Activated T-helper 2 cell treated with anti-CD3 and anti-CD28 coated beads, Interferon-gamma antibody, Interleukin-2, Interleukin-4, amounts not matched to agents 10 μg/mL and 5 μg/mL and 100 μg/mL, durations not matched to agents 14 hours and 24 hours and 36 hours (primary cell): ENCODE measurements at regions of chr7 and their contacts with region 1.

Region 1: GRCh38 chr7:92809397-92810241 is 26.8 kb downstream of the CDK6 start:
- DNase-seq: peak; percentile 71
- H3K4me3 Mint-ChIP-seq: peak overlapping the region; percentile 61
- H3K27ac Mint-ChIP-seq: peak overlapping the region; percentile 91
- H3K4me1 Mint-ChIP-seq: peaks cover 71% of the 10 kb centered on the region
- H3K27me3 Mint-ChIP-seq: no peaks in the 10 kb centered on the region

Region 2: DNA sequence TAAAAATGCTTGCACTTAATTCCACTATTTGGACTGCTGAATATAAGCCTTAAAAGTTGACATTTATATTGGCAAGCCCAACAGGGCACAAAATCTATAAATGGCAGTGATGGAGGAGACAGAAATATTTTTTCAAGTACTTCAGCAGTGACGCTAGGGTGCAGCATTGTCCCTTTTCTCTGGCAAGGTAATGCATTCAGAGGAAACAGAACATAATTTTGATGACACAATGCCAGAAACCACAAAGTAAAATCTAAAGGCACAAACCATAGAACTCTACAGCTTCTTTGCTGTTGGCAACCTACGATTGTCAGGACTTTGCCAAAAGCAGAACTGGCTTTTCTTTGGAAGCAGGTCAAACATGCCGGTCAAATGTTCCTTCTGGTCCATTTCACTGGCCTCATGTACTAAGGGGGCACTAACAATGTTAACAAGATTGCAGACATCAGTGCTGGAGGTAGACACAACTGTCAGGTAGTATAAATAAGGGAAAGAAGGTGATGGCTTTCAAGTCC is 188.5 kb before region 1 on chr7:
- intact Hi-C with region 1: loop called (anchors 1 kb)
- DNase-seq: peak; percentile 73
- H3K4me3 Mint-ChIP-seq: peak overlapping the region; percentile 37
- H3K27ac Mint-ChIP-seq: peak overlapping the region; percentile 87
- H3K4me1 Mint-ChIP-seq: peaks cover 57% of the 10 kb centered on the region
- H3K27me3 Mint-ChIP-seq: no peaks in the 10 kb centered on the region

Region 3: DNA sequence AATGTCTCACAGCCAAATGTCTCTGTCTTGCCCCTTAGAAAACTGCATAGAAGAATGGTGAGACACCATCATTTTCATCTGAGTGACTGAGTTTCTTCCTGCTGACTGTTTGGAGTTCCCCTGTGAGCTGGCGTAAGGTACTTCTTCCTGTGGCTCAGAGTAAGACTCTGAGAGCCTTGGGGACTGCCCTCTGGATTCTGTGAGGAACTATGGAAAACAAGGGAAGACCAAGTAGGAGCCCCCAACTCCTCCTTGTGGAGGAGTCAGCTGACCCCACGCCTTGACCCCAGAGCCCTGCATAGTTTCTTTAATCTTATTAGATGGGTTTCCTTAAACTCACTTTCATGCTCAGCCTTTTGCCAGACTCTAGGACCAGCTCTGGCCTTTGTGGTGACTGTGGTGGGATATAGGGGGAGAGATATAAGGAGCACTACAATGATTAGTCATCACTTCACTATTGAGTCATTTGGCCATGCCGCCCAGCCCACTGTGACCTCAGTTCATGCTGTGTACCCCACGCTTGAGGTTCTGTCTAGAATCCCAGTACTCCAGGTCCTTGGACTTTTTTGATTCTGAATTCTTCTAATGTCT is 167.6 kb before region 1 on chr7:
- intact Hi-C with region 1: loop called (anchors 5 kb)
- DNase-seq: peak; percentile 54
- H3K4me3 Mint-ChIP-seq: peak overlapping the region; percentile 47
- H3K27ac Mint-ChIP-seq: peak overlapping the region; percentile 97
- H3K4me1 Mint-ChIP-seq: peaks cover 88% of the 10 kb centered on the region
- H3K27me3 Mint-ChIP-seq: no peaks in the 10 kb centered on the region

Region 4: DNA sequence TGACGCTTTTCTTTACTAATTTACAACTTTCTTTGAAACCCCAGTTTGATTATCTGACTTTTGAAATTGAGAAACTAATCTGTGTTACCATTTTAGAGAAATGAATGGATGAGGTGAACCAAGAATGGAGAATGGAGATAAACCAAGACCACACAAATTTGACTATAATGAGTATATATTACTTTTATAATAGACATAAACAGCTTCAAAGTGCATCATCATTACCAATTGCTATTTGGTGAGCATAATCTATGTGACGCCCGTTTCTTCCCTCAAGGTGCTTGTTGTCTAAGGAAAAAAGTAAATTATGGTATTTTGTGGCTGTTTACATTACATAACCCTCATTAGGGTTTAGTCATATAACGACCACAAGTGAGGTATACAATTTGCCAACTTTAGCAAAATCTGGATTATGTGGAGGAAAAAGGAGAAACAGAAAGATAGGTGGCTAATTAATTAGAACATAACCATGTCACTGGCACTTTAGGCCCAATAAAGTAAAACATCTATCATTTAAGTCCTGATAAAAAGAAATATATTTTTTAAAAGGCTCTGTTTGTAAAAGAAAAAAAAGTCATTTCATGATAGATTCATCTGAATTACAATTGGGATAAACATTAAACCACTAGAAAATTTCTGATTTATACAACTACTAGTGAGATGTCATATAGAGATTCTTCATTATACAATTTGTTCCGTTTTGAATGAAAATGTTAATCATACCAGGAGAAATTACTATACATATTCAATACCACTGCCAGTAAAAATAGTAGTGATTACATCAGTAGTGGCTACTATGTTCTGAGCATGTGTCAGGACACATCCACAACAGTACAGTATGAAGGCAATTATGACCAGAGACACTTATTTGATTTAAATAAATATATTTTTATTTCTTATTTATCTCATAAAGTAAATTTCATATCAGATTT is 101.2 kb before region 1 on chr7:
- intact Hi-C with region 1: loop called (anchors 1 kb)
- DNase-seq: no peak
- H3K4me3 Mint-ChIP-seq: no peak overlapping the region
- H3K27ac Mint-ChIP-seq: peak overlapping the region; percentile 64
- H3K4me1 Mint-ChIP-seq: peaks cover 43% of the 10 kb centered on the region
- H3K27me3 Mint-ChIP-seq: no peaks in the 10 kb centered on the region

Region 5: DNA sequence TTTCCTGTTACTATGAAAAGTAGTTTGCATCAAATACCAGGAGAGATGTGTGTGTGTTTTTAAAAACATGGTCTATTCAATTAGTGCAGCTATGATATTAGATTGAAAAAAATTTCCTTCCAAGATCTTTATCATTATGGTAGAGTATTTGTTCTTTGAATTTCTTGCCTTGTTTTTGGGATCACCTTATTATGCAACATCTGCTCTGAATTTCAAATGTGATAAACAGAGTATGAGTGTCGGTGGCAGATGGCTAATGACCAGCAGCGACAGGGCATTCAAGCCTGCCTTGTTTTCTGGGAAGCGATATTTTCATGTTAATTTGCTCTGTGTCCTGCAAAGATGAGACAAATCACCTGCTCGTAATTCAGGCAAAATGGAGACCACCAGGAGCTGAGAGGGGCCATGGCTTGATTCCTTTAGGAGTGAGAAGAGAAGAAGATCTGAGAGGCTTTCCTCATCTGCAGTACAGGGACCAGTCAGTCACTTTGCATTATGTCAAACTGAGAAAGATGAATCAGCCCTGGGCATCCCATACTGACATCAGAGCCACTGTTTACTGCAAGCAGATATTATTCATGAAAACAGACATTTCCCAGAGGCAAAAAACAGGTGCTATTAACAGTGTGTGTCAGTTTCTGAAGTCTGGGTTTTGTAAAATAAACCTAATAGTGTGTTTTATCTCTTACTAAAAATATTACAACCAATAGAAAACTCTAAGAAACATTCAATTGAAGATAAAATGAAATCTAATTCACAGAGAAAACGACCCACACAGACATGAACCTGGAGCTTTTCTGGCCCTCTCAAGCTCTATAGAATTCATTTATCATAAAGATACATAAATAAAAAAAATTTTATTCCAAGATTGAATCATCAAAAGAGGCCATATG is 40.9 kb before region 1 on chr7:
- intact Hi-C with region 1: loop called (anchors 1 kb)
- DNase-seq: no peak
- H3K4me3 Mint-ChIP-seq: peak overlapping the region; percentile 11
- H3K27ac Mint-ChIP-seq: peak overlapping the region; percentile 83
- H3K4me1 Mint-ChIP-seq: peaks cover 64% of the 10 kb centered on the region
- H3K27me3 Mint-ChIP-seq: no peaks in the 10 kb centered on the region

Region 6: DNA sequence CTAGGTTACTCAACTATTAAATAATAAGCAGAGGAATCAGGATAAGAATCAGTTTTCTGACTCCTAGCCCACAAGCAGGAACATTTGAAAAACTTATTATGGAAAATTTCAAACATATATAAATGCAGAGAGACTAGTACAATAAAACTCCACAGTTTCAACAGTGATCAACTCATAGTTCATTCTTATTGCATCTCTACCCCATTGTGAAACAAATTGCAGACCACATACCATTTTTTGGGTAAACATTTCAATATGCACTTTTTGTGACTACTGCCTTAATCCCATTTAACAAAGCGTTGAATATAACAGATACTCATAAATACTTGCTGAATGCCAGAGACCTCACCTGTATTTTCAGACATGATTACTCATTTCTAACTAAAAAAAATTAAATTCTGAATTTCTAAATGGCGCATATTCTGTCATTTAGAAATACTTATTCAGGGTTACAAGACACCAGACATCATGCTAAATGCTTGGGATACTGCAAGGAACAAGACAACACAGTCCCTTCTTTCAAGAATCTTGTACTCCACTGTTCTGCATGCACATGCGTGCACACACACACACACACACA is 15.4 kb after region 1 on chr7:
- intact Hi-C with region 1: loop called (anchors 1 kb)
- DNase-seq: no peak
- H3K4me3 Mint-ChIP-seq: peak overlapping the region; percentile 49
- H3K27ac Mint-ChIP-seq: peak overlapping the region; percentile 70
- H3K4me1 Mint-ChIP-seq: peaks cover 67% of the 10 kb centered on the region
- H3K27me3 Mint-ChIP-seq: no peaks in the 10 kb centered on the region

Region 7: GRCh38 chr7:92843034-92843760 is 33.6 kb after region 1 on chr7:
- intact Hi-C with region 1: no loop called
- DNase-seq: no peak
- H3K4me3 Mint-ChIP-seq: no peak overlapping the region
- H3K27ac Mint-ChIP-seq: no peak overlapping the region
- H3K4me1 Mint-ChIP-seq: peaks cover 21% of the 10 kb centered on the region
- H3K27me3 Mint-ChIP-seq: peaks cover 19% of the 10 kb centered on the region

Region 8: DNA sequence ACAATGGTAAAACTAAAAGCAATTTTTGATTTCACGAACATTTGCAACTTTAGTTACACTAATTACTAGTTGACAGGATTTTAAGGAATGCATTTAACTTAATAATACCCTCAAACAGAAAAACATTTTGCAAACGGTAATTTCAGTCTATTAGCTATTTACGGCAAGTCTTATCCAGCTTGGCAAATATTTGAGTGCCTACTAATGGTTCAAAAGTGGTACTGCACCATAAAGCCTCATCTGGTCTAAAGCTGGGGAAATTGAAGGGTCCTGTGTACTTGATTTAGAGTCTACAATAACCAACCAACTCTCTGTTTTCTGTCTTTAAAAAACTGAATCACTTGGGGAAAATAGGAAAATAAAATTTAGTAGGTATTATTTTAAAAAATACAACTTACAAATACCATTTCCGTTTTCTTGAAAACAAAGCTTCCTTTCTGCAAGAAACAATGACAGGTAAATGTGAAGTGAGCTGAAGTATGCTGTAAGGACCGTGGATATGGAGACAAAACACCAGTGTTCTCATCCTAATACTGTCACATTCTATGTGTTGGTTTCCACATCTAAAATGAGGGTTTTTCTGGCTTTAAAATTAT is 564.8 kb after region 1 on chr7:
- intact Hi-C with region 1: no loop called
- DNase-seq: no peak
- H3K4me3 Mint-ChIP-seq: no peak overlapping the region
- H3K27ac Mint-ChIP-seq: no peak overlapping the region
- H3K4me1 Mint-ChIP-seq: no peaks in the 10 kb centered on the region
- H3K27me3 Mint-ChIP-seq: peaks cover 16% of the 10 kb centered on the region